H1 (cell line): ENCODE measurements at regions of chr1 and their contacts with region 1.

Region 1: GRCh38 chr1:204207136-204207616 is 6.6 kb downstream of the GOLT1A start:
- DNase-seq: peak; percentile 41 to 100
- H3K4me3 ChIP-seq: no peak overlapping the region
- H3K27ac ChIP-seq: no peak overlapping the region
- H3K4me1 ChIP-seq: peaks cover 0 to 2% (median 2%) of the 10 kb centered on the region in 4 experiments; a peak in 4 of 7 replicates
- H3K27me3 ChIP-seq: no peaks in the 10 kb centered on the region
- CTCF ChIP-seq: peak; percentile 96 to 98 (median 96)
- EP300 ChIP-seq: no peak
- POLR2A ChIP-seq: no peak
- RAD21 ChIP-seq: peak; percentile 72 to 81

Region 2: DNA sequence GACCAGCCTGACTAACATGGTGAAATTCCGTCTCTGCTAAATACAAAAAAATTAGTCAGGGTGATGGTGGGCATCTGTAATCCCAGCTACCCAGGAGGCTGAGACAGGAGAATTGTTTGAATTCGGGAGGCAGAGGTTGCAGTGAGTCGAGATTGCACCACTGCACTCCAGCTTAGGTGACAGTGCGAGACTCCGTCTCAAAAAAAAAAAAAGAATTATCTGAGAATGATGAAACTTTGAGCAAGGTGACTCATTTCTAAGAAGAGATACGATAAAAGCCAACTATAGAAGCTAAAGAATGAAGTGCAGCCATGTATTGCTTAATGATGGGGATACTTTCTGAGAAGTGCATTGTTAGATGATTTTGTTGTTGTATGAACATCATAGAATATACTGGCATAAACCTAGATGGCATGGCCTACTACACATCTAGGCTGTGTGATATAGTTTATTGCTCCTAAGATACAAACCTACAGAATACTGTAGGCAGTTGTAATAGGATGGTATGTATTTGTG is 281.1 kb before region 1 on chr1:
- CTCF ChIA-PET with region 1: no interaction called
- POLR2A ChIA-PET with region 1: no interaction called
- DNase-seq: no peak
- H3K4me3 ChIP-seq: no peak overlapping the region
- H3K27ac ChIP-seq: no peak overlapping the region
- H3K4me1 ChIP-seq: no peaks in the 10 kb centered on the region
- H3K27me3 ChIP-seq: no peaks in the 10 kb centered on the region
- CTCF ChIP-seq: no peak
- EP300 ChIP-seq: no peak
- POLR2A ChIP-seq: no peak
- RAD21 ChIP-seq: no peak

Region 3: GRCh38 chr1:203985044-203985443 is 222.1 kb before region 1 on chr1:
- CTCF ChIA-PET with region 1: no interaction called
- POLR2A ChIA-PET with region 1: no interaction called
- DNase-seq: peak; percentile 72 to 87
- H3K4me3 ChIP-seq: peak overlapping the region in 1 of 4 experiments; percentile 37; a peak in 2 of 8 replicates
- H3K27ac ChIP-seq: peak overlapping the region; percentile 64
- H3K4me1 ChIP-seq: peaks cover 3 to 14% (median 9%) of the 10 kb centered on the region in 4 experiments; a peak in 4 of 7 replicates
- H3K27me3 ChIP-seq: no peaks in the 10 kb centered on the region
- CTCF ChIP-seq: no peak
- EP300 ChIP-seq: peak; percentile 29 to 98
- POLR2A ChIP-seq: no peak
- RAD21 ChIP-seq: peak; percentile 38 to 42

Region 4: DNA sequence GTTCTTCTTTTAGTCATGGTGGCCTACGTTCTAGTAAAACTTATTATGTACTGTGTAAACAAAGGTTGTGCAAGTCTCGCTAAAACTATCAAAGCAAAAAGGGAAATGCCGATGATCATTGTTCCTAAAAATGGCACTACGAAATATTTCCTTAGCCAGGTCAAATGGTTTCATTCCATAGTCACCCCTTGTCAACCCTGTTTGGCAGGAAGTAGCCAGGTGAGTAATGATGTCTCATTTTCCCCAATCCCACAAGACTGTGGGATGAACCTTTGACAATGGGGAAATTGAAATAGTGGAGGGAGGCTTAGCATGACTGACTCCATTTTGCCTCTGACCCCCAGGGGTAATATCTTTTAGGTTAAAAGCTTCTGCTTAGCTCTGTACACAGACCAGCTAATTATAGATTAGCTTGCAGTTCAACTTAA is 35.4 kb before region 1 on chr1:
- CTCF ChIA-PET with region 1: interaction called, 360 read pairs
- POLR2A ChIA-PET with region 1: no interaction called
- DNase-seq: no peak
- H3K4me3 ChIP-seq: no peak overlapping the region
- H3K27ac ChIP-seq: no peak overlapping the region
- H3K4me1 ChIP-seq: no peaks in the 10 kb centered on the region
- H3K27me3 ChIP-seq: 0 out of 7 replicates have a peak, but pooled peaks cover 0 to 2% (median 0%) of the 10 kb centered on the region in 4 experiments
- CTCF ChIP-seq: no peak
- EP300 ChIP-seq: no peak
- POLR2A ChIP-seq: no peak
- RAD21 ChIP-seq: no peak

Region 5: DNA sequence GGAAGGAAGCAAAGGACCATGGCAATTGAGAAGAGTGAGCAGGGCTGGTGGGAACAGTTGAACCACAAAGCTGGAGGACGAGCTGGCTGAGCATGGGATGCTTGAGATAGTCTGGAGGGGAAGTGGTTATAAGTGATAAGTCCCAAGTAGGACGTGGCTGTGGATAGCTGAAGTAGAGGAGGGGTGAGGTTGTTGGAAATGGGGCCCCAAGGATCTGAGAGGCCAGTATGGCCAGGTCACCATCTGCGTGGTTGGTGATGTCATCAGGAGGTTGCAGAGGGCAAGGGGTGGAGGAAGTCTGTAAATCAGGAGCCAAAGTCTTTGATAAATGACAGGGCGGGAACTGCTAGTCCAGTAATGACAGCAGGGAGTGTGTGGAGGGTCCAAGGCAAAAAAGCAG is 30.0 kb before region 1 on chr1:
- CTCF ChIA-PET with region 1: interaction called, 14 read pairs
- POLR2A ChIA-PET with region 1: no interaction called
- DNase-seq: no peak
- H3K4me3 ChIP-seq: no peak overlapping the region
- H3K27ac ChIP-seq: no peak overlapping the region
- H3K4me1 ChIP-seq: no peaks in the 10 kb centered on the region
- H3K27me3 ChIP-seq: 0 out of 7 replicates have a peak, but pooled peaks cover 0 to 2% (median 0%) of the 10 kb centered on the region in 4 experiments
- CTCF ChIP-seq: no peak
- EP300 ChIP-seq: no peak
- POLR2A ChIP-seq: no peak
- RAD21 ChIP-seq: no peak

Region 6: GRCh38 chr1:204190212-204191211 is 16.7 kb before region 1 on chr1:
- CTCF ChIA-PET with region 1: interaction called, 73 read pairs
- POLR2A ChIA-PET with region 1: interaction called, 11 read pairs
- DNase-seq: peak in 1 of 2 experiments; percentile 84
- H3K4me3 ChIP-seq: peak overlapping the region; percentile 20 to 57 (median 23)
- H3K27ac ChIP-seq: no peak overlapping the region
- H3K4me1 ChIP-seq: no peaks in the 10 kb centered on the region
- H3K27me3 ChIP-seq: peaks cover 0 to 8% (median 6%) of the 10 kb centered on the region in 4 experiments; a peak in 4 of 7 replicates
- CTCF ChIP-seq: no peak
- EP300 ChIP-seq: no peak
- POLR2A ChIP-seq: no peak
- RAD21 ChIP-seq: no peak

Region 7: DNA sequence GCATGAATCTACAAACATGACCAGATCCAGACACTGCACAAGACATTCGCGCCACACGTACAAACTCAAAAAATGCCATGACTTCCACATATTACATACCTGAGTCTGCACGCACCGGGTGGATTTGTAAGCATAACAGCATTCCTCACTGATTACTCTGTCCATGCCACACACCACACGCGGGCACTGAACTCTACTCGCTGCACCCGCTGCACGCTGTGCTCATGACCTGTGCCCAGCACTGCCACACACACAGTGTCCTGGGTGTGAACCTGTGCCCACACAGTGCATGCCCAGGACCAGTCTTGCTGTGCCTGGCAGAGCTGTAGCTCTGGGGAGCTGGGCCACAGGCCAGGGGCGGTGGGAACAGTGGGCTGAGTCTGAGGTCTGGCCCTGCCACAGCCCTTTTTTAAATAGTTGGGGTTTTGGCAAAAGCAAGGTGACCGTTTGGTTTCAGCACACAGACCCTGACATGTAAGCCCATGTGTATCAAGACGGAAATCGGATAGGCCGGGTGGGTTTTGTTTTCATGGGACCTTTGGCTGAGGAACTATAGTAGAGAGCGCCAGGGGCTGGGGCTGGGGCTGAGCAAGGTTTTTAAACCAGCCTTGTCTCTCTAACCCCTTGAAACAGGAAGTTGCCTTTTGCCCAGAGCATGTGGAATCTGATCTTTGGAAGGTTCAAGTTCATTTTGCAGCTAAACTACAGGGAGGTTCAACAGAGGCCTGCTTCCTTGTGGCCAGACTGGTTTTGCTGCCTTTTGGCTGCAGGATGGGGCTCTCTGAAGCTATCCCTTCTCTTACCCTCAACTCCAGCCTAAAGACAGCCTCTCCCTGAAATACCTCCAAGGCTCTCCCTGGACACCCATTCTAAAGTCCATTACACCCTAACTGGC is 18.9 kb after region 1 on chr1:
- CTCF ChIA-PET with region 1: interaction called, 18 read pairs
- POLR2A ChIA-PET with region 1: no interaction called
- DNase-seq: no peak
- H3K4me3 ChIP-seq: no peak overlapping the region
- H3K27ac ChIP-seq: no peak overlapping the region
- H3K4me1 ChIP-seq: 0 out of 7 replicates have a peak, but pooled peaks cover 0 to 2% (median 0%) of the 10 kb centered on the region in 4 experiments
- H3K27me3 ChIP-seq: no peaks in the 10 kb centered on the region
- CTCF ChIP-seq: no peak
- EP300 ChIP-seq: no peak
- POLR2A ChIP-seq: no peak
- RAD21 ChIP-seq: no peak

Region 8: GRCh38 chr1:204465546-204466415 is 258.6 kb after region 1 on chr1:
- CTCF ChIA-PET with region 1: no interaction called
- POLR2A ChIA-PET with region 1: no interaction called
- DNase-seq: no peak
- H3K4me3 ChIP-seq: no peak overlapping the region
- H3K27ac ChIP-seq: no peak overlapping the region
- H3K4me1 ChIP-seq: peaks cover 0 to 5% (median under 1%) of the 10 kb centered on the region in 4 experiments; a peak in 2 of 7 replicates
- H3K27me3 ChIP-seq: no peaks in the 10 kb centered on the region
- CTCF ChIP-seq: no peak
- EP300 ChIP-seq: no peak
- POLR2A ChIP-seq: no peak
- RAD21 ChIP-seq: no peak

Region 9: GRCh38 chr1:204541626-204542025 is 334.4 kb after region 1 on chr1:
- CTCF ChIA-PET with region 1: no interaction called
- POLR2A ChIA-PET with region 1: no interaction called
- DNase-seq: no peak
- H3K4me3 ChIP-seq: no peak overlapping the region
- H3K27ac ChIP-seq: no peak overlapping the region
- H3K4me1 ChIP-seq: no peaks in the 10 kb centered on the region
- H3K27me3 ChIP-seq: no peaks in the 10 kb centered on the region
- CTCF ChIP-seq: no peak
- EP300 ChIP-seq: no peak
- POLR2A ChIP-seq: no peak
- RAD21 ChIP-seq: no peak